Activated CD8-positive, alpha-beta memory T cell treated with anti-CD3 and anti-CD28 coated beads, Interleukin-2, amount 10 ng/mL, durations not matched to agents 7 days and 5 days (primary cell): ENCODE measurements at regions of chr7 and their contacts with region 1.

Region 1: DNA sequence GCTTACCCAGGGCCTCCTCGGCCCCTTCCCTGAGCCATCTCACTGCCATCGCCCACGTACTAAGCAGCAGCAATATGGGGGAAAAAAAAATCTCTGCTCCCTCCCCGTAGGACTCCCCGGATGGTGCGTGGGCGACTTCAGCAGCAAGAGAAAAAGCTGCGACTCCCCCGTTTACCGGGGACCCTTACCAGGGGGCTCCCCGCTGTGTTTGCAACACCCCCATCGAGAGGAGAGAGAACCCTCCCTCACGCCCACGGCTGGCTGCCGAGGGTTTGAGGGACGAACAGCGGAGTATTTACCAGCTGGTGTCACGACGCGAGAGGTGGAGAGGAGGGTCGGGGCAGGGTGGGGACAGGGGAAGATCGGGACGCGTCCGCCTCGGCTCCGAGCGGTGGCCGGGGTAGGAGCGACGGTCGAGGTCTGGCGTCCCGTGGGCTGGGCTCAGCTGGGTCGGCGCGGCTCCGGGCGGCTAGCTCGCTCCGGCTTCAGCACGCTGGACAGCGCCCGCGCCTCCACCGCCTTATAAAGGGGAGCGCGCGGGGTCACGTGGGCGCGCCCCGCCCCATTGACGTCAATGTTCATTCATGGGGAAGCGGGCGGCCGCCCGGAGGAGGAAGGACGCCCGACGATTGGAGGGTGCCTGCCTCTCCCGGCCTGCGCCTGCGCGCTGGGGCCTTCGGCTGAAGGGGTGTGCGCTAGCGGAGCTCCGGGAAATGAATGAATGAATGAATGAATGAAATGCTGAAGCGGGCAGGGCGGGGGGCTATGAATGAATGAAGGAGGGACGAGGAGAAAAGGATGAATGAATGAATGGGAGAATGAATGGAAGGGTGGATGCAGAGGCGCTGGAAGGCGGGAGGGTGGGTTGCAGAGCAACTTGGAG is at the start of gene VGF:
- DNase-seq: peak; percentile 95
- ATAC-seq: peak; percentile 85
- H3K4me3 Mint-ChIP-seq: peak within 1 kb of the TSS; percentile 46
- H3K27ac Mint-ChIP-seq: no peak within 1 kb of the TSS
- H3K4me1 Mint-ChIP-seq: peaks cover 38% of the 10 kb centered on the region
- H3K27me3 Mint-ChIP-seq: peaks cover 62% of the 10 kb centered on the region
- total RNA-seq, gene VGF: 0.44 to 0.66 TPM

Region 2: GRCh38 chr7:101153969-101154692 is 11.2 kb before region 1 on chr7 and contains the start of gene AP1S1:
- CTCF ChIA-PET with region 1: interaction called, 15 read pairs
- DNase-seq: peak; percentile 96
- ATAC-seq: peak; percentile 93
- H3K4me3 Mint-ChIP-seq: peak within 1 kb of the TSS; percentile 73
- H3K27ac Mint-ChIP-seq: peak within 1 kb of the TSS; percentile 58
- H3K4me1 Mint-ChIP-seq: peaks cover 9% of the 10 kb centered on the region
- H3K27me3 Mint-ChIP-seq: peaks cover 21% of the 10 kb centered on the region
- total RNA-seq, gene AP1S1: 49.9 to 51.7 TPM

Region 3: DNA sequence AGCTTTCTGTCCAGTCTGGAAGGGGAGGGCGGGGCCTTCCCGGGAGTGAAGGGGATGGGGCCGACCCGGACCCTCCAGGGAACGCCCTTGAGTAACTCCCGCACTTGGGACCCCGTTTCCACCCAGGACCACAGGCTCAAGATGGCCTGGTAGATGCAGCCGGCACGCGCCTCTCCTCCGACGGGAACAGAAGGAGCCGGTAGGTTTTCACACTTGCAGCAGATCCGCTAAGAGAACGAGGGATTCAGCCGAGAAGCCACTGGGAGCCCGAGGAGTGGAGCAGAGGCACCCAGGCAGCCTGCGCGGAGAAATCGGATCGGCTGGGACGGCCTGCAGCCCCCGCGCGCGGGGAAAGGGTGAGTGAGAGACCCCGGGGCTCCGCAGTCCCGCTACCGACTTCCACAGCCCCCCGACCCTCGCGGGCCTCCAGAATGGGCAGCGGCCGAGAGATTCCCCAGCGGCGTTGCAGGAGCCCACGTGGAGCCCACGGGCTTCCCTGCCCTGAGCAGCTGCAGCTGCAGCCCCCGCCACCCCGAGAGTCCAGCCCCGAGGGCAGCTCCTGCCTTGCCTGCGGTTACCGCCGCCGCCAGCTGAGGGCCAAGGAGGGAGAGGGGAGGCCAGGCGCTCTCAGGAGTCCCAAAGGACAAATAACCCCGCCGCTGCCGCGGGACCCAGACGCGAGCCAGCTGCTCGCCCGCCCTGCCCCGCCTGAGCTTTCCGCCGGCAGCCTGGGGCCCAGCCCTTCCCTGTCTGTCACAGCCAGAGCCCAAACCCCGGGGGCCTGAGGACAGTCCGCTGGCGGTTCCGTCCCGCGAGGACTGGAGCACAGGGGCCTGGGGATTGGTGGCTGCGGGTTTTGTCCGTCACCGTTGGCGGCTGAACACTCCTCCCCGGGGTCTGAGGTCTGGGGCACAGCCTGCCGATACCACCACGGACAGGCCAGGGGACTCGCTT is 134.5 kb after region 1 on chr7:
- CTCF ChIA-PET with region 1: no interaction called
- DNase-seq: no peak
- ATAC-seq: no peak
- H3K4me3 Mint-ChIP-seq: no peak overlapping the region
- H3K27ac Mint-ChIP-seq: no peak overlapping the region
- H3K4me1 Mint-ChIP-seq: no peaks in the 10 kb centered on the region
- H3K27me3 Mint-ChIP-seq: peaks cover 59% of the 10 kb centered on the region

Region 4: DNA sequence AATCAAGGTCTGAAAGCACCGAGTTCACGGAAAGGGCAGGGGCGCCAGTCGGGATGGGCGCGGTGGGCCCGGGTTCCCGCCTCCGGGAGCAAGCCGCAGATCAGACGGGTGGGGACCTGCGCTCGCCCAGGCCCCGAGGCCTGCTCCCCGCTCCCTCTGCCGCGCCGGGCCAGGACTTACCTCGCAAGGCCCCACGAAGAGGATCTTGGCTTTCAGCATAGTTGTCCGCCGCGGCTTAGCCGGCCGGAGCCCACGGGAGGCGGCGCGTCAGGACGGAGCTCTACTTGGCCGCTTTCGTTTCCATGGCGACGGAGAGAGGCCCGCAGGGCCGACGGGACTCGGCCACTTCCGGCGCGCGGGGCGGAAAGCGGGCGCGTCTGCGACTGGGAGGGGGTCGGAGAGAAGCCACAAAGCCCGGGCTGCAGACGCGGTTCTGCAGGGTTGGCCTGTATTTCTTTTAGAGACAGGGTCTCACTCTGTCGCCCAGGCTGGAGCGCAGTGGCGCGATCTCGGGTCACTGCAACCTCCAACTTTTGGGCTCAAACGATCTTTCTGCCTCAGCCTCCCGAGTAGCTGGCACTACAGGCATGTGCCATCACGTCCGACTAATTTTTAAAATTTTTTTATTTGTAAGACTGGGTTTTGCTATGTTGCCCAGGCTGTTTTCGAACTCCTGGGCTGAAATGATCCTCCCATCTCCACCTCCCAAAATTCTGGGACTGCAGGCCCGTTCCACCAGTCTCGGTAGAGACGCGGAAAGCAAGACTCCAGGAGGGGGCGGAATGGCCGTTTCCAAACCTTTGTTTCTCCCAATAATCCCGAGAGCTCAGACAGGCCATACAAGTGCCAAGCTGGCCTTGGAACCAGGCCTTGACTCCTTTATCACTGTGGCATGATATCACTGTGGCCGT is 156.4 kb after region 1 on chr7 and contains the start of gene IFT22:
- CTCF ChIA-PET with region 1: no interaction called
- DNase-seq: peak; percentile 93
- ATAC-seq: peak; percentile 96
- H3K4me3 Mint-ChIP-seq: peak within 1 kb of the TSS; percentile 84
- H3K27ac Mint-ChIP-seq: peak within 1 kb of the TSS; percentile 75
- H3K4me1 Mint-ChIP-seq: peaks cover 11% of the 10 kb centered on the region
- H3K27me3 Mint-ChIP-seq: peaks cover 2% of the 10 kb centered on the region
- total RNA-seq, gene IFT22: 4.7 to 4.8 TPM